ENCODE measurements at regions of chr6 and their contacts with region 1.

Region 1: DNA sequence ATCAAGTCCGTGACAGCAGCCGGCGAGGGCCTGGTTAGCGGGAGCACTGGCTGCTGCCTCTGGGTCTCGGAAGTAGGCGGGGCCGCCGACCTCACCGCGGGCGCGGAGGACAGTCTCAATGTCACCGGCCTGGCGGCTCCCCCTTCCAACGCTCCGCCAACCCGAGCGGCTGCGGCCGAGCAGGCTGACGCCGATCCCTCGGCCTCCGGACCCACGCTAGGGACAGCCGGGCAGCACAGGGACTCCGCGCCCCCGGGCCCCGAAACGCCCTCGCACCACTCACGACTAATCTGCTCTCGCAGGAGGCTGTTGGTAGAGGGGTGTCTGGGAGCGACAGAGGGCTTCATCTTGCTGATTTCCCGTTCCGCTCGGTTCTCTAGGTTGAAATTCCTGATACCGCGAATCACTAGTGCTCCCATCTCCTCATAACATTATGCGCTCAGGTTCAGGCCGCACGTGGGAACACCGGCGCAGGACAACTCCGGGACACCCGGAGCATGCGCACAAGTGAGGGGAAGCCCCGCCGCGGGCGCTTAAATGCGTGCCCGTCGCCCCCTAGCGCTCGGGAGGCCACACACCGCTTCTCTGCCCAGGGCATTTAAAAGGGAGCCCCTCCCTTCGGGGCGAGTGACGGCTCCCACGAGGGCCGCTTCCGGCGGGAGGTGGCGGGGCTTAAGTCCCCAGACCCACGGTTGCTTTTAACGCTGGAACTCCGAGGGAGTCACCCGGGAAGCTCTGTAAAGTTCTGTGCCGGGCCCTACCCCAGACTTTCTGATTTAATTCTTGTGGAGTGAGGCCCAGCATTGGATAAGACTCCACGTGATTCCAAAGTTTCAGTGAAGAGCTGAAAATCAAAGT is at the start of gene NDUFAF4:
- DNase-seq: peak; percentile 98
- H3K4me3 ChIP-seq: peak within 1 kb of the TSS; percentile 87
- H3K27ac ChIP-seq: peak within 1 kb of the TSS; percentile 82
- H3K4me1 ChIP-seq: peaks cover 20% of the 10 kb centered on the region
- H3K27me3 ChIP-seq: no peaks in the 10 kb centered on the region
- CTCF ChIP-seq: peak; percentile 95
- total RNA-seq, gene NDUFAF4: 96.0 and 120 TPM in 2 replicates

Region 2: GRCh38 chr6:96521644-96522464 is 375.8 kb before region 1 on chr6 and contains the start of gene UFL1:
- CTCF ChIA-PET with region 1: no interaction called
- POLR2A ChIA-PET with region 1: no interaction called
- intact Hi-C with region 1: loop called (anchors 10 kb)
- DNase-seq: peak; percentile 97
- H3K4me3 ChIP-seq: peak within 1 kb of the TSS; percentile 84
- H3K27ac ChIP-seq: peak within 1 kb of the TSS; percentile 95
- H3K4me1 ChIP-seq: peaks cover 20% of the 10 kb centered on the region
- H3K27me3 ChIP-seq: no peaks in the 10 kb centered on the region
- CTCF ChIP-seq: no peak
- total RNA-seq, gene UFL1: 19.6 and 25.0 TPM in 2 replicates

Region 3: GRCh38 chr6:96542702-96543101 is 354.9 kb before region 1 on chr6:
- CTCF ChIA-PET with region 1: no interaction called
- POLR2A ChIA-PET with region 1: no interaction called
- intact Hi-C with region 1: loop called (anchors 2 kb)
- DNase-seq: peak; percentile 39
- H3K4me3 ChIP-seq: no peak overlapping the region
- H3K27ac ChIP-seq: no peak overlapping the region
- H3K4me1 ChIP-seq: no peaks in the 10 kb centered on the region
- H3K27me3 ChIP-seq: no peaks in the 10 kb centered on the region
- CTCF ChIP-seq: peak; percentile 60

Region 4: GRCh38 chr6:96626759-96627364 is 270.8 kb before region 1 on chr6:
- CTCF ChIA-PET with region 1: interaction called, 5 read pairs
- POLR2A ChIA-PET with region 1: no interaction called
- intact Hi-C with region 1: loop called (anchors 2 kb)
- DNase-seq: peak; percentile 55
- H3K4me3 ChIP-seq: no peak overlapping the region
- H3K27ac ChIP-seq: no peak overlapping the region
- H3K4me1 ChIP-seq: no peaks in the 10 kb centered on the region
- H3K27me3 ChIP-seq: no peaks in the 10 kb centered on the region
- CTCF ChIP-seq: peak; percentile 55

Region 5: DNA sequence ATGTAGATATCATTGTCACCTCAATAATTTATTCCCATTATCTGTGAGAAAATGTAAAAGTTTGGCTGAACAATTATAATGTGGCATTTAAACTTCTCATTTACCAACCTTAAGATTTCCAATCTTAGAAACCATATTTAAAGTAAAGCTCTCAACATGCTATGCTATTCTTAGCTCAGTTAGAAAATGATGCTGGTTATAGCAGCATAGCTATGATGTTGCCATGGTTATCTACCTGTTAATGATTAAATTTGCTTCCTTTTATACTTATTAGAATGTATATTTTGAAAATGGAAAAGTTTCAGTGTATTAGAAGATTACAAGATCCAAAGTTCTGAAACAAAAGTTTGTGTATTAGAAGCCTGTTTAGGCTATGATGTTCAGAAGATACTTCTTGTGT is 170.5 kb before region 1 on chr6:
- CTCF ChIA-PET with region 1: no interaction called
- POLR2A ChIA-PET with region 1: no interaction called
- intact Hi-C with region 1: no loop called
- DNase-seq: no peak
- H3K4me3 ChIP-seq: no peak overlapping the region
- H3K27ac ChIP-seq: no peak overlapping the region
- H3K4me1 ChIP-seq: no peaks in the 10 kb centered on the region
- H3K27me3 ChIP-seq: no peaks in the 10 kb centered on the region
- CTCF ChIP-seq: no peak

Region 6: DNA sequence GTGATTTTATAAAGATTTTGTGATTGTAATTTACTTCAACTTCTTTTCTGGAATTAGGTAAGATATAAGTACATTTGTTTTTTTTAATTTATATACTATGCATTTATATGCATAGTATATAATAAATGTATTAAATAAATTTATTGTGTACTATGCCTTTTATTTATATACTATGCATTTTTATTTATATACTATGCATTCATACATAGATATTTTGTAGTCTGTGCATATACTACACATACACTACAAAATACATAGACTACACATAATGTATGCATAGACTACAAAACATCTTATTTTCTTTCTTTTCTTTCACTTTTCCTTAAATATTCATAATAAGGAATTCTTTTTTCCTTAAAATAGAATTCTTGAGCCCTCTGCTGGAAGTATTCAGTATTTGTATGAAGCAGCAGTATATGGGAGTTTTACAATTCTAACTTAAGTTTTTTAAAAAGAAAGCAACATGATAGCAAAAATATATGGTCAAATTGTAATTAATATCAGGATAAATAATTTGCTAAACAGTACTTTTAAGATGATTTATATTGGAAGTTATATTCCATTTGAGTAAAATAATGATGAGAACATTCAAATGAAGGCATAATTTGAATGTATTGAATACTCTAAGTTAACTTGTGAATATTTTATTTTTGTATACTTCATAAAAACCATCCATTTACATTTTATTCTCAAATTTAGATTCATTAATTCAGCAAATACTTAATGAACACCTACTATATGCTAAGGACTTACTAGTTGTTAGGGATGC is 156.2 kb after region 1 on chr6:
- CTCF ChIA-PET with region 1: no interaction called
- POLR2A ChIA-PET with region 1: no interaction called
- intact Hi-C with region 1: loop called (anchors 1 kb)
- DNase-seq: peak; percentile 38
- H3K4me3 ChIP-seq: no peak overlapping the region
- H3K27ac ChIP-seq: no peak overlapping the region
- H3K4me1 ChIP-seq: peaks cover 9% of the 10 kb centered on the region
- H3K27me3 ChIP-seq: no peaks in the 10 kb centered on the region
- CTCF ChIP-seq: peak; percentile 77

Measured in A673 (cell line).